ENCODE measurements at regions of chr22 and their contacts with region 1.

Region 1: GRCh38 chr22:22137891-22138290 is 106.7 kb upstream of the VPREB1 start:
- DNase-seq: no peak
- H3K4me3 ChIP-seq: no peak overlapping the region
- H3K27ac ChIP-seq: no peak overlapping the region
- H3K27me3 ChIP-seq: peaks cover 35% of the 10 kb centered on the region
- CTCF ChIP-seq: no peak

Region 2: DNA sequence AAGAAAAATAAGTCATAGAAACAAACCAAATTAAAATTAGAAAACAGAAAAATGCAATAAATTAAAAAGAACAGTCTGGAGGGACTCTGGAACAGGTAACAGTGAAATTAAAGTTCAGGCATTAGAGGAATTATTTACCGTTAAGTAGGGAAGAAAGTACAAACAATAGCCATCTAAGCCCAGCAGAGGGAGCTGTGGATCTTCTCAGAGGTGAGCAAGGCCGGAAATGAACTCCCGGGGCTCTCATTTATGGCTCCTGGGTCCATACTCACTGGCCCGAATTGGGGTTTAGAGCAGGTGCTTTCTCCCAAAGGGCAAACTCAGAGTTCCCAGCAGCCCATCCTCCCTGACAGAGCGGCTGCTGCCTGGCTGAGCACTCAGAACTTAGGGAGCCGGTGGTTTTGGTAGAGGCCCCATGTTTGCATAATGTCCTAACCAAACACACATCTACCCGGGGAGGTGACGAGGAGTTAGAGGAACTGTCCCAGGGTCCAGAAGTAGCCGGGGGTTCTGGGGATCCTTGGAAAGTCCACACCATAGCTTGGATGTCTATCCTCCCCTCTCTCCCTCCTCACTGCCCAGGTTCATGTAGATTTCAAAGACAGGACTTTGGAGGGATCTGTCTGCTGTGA is 18.9 kb after region 1 on chr22:
- CTCF ChIA-PET with region 1: interaction called, 10 read pairs
- POLR2A ChIA-PET with region 1: interaction called, 3 read pairs
- DNase-seq: peak; percentile 33
- H3K4me3 ChIP-seq: no peak overlapping the region
- H3K27ac ChIP-seq: no peak overlapping the region
- H3K27me3 ChIP-seq: peaks cover 7% of the 10 kb centered on the region
- CTCF ChIP-seq: peak; percentile 76